ENCODE measurements at regions of chr6 and their contacts with region 1.

Region 1: DNA sequence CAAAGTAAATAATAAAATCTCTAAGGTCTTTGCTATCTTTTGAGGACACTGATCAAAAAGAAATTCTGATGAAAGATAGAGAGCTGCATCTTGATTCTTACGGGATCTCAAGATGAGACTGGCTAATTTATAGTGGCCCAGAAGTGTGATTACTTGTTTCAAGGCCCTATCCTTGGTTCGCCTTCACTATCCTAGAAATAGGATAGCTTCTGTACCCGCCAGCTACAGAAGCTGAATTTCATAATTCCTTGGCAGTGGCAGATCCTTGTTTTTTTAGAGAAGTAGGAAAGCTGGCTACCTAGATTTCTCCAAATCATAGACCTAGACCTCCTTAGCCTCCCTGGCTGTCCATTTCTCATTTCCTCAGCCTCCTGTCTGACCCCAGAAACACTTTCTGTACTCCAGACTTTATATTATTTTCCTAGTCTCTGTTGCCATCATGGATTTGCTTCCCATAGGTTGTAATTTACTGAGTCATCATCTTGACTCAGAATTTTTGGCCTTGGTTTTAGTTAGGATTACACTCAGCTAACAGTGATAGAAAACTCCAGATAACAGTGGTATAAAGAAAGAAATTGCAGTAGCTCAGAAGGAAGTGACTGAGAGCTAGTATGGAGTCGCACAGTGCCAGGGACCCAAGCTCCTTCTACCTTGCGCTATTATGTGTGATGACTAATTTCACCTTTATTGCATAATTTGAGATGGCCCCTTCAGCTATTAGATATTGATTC is 27.7 kb downstream of the PHF3 start:
- DNase-seq: peak; percentile 43
- H3K4me3 ChIP-seq: no peak overlapping the region
- CTCF ChIP-seq: no peak

Region 2: DNA sequence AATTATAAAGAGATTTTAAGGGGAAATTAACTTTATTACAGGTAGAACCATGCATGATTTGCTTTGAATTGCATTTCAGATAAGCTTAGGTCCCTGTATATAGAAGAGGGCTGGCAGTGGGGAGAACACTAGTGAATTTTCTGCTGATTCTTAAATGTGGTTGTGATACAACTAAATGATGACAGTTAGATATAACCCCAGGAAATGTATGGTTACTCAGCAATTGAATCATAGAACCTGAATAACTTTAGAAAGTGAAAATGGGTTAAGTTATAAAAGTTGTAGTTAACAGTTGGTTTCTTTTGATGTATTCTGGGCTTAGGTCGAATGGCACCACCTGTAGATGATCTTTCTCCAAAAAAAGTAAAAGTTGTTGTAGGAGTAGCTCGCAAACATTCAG is 42.4 kb after region 1 on chr6:
- in situ Hi-C with region 1: loop called (anchors 5 kb)
- DNase-seq: no peak
- H3K4me3 ChIP-seq: no peak overlapping the region
- CTCF ChIP-seq: no peak

Region 3: DNA sequence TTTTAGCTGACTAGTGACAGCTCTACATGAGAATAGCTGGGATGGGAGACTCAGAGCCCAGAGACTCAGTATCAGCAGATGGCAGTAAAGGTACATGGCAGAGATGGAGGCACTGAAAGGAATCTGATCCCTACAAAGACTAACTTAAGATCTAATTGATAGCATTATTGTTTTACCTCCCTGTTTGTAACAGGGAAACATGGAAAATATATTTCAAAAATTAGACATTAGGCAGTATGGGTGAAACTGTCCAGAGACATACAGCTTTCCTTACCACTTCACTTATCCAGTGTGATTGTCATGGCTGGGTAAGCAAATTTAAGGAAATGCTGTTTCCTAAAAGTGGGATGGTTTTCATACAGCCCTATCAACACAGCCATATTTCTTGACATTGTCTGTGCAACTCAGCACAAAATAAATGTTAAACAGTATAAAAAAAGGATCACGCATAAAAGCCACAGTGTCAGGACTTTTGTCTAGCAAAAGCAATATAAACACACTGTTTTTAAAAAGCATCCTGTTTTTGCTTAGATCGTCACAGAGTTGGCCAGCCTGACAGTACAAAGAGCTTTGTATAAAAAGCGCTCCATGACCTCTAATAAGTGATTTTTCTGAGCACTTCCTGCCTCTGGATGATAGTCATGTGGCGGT is 349.2 kb after region 1 on chr6:
- in situ Hi-C with region 1: no loop called
- DNase-seq: peak; percentile 38
- H3K4me3 ChIP-seq: no peak overlapping the region
- CTCF ChIP-seq: peak; percentile 86